ENCODE measurements at regions of chr7 and their contacts with region 1.

Region 1: DNA sequence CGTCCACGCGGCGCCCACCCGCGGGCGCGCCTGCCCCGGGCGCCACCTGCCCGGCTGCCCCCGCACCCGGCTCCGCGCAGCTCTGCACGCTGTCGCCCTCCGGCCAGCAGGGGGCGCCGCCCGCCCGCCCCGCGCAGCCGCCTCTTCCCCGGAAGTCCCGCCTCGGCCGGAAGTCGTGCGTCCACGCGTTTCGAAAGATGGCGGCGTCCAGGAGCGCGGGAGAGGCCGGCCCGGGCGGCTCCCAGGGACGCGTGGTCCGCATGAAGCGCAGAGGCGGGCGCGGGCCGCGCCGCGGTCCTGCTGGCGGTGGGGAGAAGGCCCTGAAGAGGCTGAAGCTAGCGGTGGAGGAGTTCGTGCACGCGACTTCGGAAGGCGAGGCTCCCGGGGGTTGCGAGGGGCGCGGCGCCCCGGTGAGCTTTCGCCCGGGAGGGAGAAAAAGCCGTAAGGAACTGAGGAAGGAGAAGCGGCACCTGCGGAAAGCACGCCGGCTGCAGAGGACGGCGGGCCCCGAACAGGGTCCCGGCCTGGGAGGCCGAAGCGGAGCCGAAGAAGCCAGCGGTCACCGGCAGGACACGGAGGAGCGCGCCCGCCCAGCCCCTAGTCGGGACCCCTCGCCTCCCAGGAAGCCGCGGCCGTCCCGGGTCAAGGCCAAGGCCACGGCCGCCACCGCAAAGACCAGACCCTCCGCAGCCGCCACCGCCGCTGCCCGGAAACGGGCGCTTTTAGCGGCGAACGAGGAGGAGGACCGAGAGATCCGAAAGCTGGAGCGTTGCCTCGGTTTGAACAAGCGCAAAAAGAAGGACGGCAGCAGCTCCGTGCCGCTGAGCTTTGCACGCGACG is at the start of gene NOM1:
- DNase-seq: peak; percentile 66 to 86
- H3K4me3 ChIP-seq: peak within 1 kb of the TSS; percentile 84 to 99 (median 97)
- H3K27ac ChIP-seq: no peak within 1 kb of the TSS
- H3K4me1 ChIP-seq: peaks cover 0 to 13% of the 10 kb centered on the region in 2 donors
- H3K27me3 ChIP-seq: no peaks in the 10 kb centered on the region
- CTCF ChIP-seq: peak in 1 of 3 donors; percentile 98
- POLR2A ChIP-seq: no peak
- total RNA-seq, gene NOM1: 17.1 to 31.5 (median 25.2) TPM

Region 2: GRCh38 chr7:155009570-155010157 is 1940.1 kb before region 1 on chr7:
- intact Hi-C with region 1: loop called (anchors 10 kb)
- DNase-seq: no peak
- H3K4me3 ChIP-seq: no peak overlapping the region
- H3K27ac ChIP-seq: no peak overlapping the region
- H3K4me1 ChIP-seq: no peaks in the 10 kb centered on the region
- H3K27me3 ChIP-seq: no peaks in the 10 kb centered on the region
- CTCF ChIP-seq: no peak
- POLR2A ChIP-seq: no peak

Region 3: GRCh38 chr7:157010588-157011332 is 61.0 kb after region 1 on chr7 and contains the start of gene MNX1:
- intact Hi-C with region 1: no loop called
- DNase-seq: peak in 1 of 2 donors; percentile 23
- H3K4me3 ChIP-seq: peak within 1 kb of the TSS; percentile 23 to 77 (median 65)
- H3K27ac ChIP-seq: no peak within 1 kb of the TSS
- H3K4me1 ChIP-seq: no peaks in the 10 kb centered on the region
- H3K27me3 ChIP-seq: peaks cover 0 to 91% of the 10 kb centered on the region in 2 donors
- CTCF ChIP-seq: no peak
- POLR2A ChIP-seq: no peak
- total RNA-seq, gene MNX1: 0.15 to 0.33 TPM in 2 of 3 donors, not detected in the other

Region 4: DNA sequence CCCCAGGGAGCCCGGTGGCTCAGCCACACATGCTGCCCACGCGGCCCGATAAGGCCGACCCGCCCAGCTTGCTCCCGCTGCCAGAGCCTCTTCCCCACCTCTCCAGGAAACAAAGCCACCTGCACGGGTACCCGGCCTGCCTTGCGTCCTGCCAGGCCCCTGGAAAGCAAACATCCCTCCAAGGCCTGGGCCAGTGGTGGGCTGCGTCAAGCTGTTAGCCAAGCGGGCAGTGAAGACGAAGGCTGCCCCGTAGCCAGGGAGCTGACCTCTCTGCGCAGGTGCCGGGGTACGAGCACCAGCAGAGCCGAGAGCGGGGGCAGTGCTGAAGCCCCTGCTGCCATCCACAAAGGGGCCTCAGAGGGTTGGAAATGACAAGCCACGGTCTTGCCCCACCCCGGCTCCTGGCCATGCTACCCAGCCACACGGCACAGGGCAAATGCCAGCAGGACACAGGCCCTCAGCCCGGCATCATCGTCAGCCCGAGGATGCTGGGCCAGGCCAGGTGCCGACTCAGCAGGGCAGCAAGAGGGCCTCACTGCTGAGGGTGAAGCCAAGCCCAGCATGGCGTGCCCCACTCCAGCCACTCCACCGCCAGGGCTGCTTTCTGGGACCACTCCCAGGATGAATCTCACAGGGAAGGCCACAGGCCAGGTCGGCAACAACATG is 1497.9 kb after region 1 on chr7:
- intact Hi-C with region 1: no loop called
- DNase-seq: no peak
- H3K4me3 ChIP-seq: no peak overlapping the region
- H3K27ac ChIP-seq: no peak overlapping the region
- H3K4me1 ChIP-seq: no peaks in the 10 kb centered on the region
- H3K27me3 ChIP-seq: peaks cover 0 to 29% of the 10 kb centered on the region in 2 donors
- CTCF ChIP-seq: no peak
- POLR2A ChIP-seq: no peak